ENCODE measurements at regions of chr11 and their contacts with region 1.

Region 1: GRCh38 chr11:68402355-68403031 is 58.1 kb upstream of the PPP6R3 start:
- DNase-seq: no peak
- ATAC-seq: peak; percentile 50; the same call in 1 of the 2 replicates
- H3K4me3 ChIP-seq: no peak overlapping the region
- H3K27ac ChIP-seq: no peak overlapping the region
- H3K4me1 ChIP-seq: no peaks in the 10 kb centered on the region; the same call in 1 of the 2 replicates
- H3K27me3 ChIP-seq: no peaks in the 10 kb centered on the region
- CTCF ChIP-seq: no peak

Region 2: GRCh38 chr11:68454767-68455166 is 52.3 kb after region 1 on chr11:
- CTCF ChIA-PET with region 1: no interaction called
- POLR2A ChIA-PET with region 1: interaction called, 14 read pairs
- in situ Hi-C with region 1: no loop called
- intact Hi-C with region 1: no loop called
- DNase-seq: no peak
- ATAC-seq: peak; percentile 27; the same call in 1 of the 2 replicates
- H3K4me3 ChIP-seq: no peak overlapping the region
- H3K27ac ChIP-seq: no peak overlapping the region
- H3K4me1 ChIP-seq: peaks cover 15% of the 10 kb centered on the region
- H3K27me3 ChIP-seq: no peaks in the 10 kb centered on the region
- CTCF ChIP-seq: no peak

Measured in Panc1 (cell line).